Activated T-helper 1 cell treated with anti-CD3 and anti-CD28 coated beads, Interleukin-12 subunit alpha, Interleukin-12 subunit beta, Interleukin-2, Interleukin-4 antibody, amounts not matched to agents 30 ng/mL and 10 ng/mL and 1 ng/mL, durations not matched to agents 14 hours and 24 hours and 36 hours (primary cell): ENCODE measurements at regions of chr10 and their contacts with region 1.

Region 1: DNA sequence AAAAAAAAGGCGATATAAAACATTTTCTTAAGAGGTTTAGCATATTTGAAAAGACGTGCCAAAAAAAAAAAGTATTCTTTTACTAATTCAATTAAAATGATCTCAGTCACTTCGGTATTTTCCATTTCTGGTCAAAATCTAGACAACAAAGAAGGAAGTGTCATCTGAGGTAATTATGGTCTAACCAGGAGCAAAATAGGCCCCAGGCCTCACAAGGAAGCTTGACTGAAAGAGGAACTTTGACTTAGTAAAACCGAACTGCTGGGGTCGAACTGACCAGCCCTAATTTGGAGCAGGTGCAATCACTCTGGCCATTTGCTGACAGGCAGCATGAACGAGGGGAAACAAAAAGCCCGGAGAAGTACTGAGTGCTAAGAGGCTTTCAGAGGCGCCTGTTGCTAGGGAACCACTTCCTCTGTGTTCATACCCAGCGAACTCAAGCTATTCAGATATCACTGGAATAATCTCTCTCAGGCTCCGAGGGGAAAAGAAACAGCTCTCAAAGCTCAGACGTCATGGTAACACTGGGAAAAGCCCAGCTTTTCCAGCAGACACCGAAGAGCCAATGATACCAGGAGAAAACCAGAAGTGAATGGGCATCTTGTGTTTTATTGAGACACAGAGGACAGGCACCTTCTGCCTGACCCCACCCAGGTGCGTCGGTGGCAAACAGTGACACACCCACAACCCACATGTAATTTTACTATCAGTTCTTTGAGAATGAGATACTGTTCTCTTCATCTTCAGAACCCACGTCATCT is 126.5 kb downstream of the FAM107B start:
- DNase-seq: peak; percentile 67
- H3K4me3 Mint-ChIP-seq: peak overlapping the region; percentile 73
- H3K27ac Mint-ChIP-seq: peak overlapping the region; percentile 98
- H3K4me1 Mint-ChIP-seq: peaks cover 61% of the 10 kb centered on the region
- H3K27me3 Mint-ChIP-seq: no peaks in the 10 kb centered on the region

Region 2: DNA sequence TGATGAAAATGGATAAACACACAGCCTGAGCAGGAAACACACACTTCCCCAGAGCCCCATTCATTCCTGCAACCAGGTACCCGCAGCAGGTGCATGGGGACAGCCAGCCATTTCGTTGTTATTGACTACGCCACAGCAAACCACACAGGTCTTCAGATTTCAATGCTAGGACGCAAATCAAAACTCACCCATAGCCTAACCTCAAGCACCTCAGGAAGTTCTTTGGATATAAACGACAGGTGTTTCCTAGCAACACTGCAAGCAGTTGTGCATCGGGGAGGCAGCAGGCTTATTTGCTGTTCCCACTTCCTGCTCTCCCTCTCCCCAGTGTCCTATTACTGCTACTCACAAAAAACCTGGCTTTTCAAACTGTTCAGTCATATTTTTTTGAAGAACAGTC is 141.0 kb before region 1 on chr10:
- intact Hi-C with region 1: loop called (anchors 5 kb)
- DNase-seq: peak; percentile 37
- H3K4me3 Mint-ChIP-seq: no peak overlapping the region
- H3K27ac Mint-ChIP-seq: peak overlapping the region; percentile 70
- H3K4me1 Mint-ChIP-seq: peaks cover 35% of the 10 kb centered on the region
- H3K27me3 Mint-ChIP-seq: no peaks in the 10 kb centered on the region

Region 3: GRCh38 chr10:14588084-14588937 is 59.9 kb before region 1 on chr10:
- intact Hi-C with region 1: loop called (anchors 1 kb)
- DNase-seq: peak; percentile 52
- H3K4me3 Mint-ChIP-seq: peak overlapping the region; percentile 74
- H3K27ac Mint-ChIP-seq: peak overlapping the region; percentile 97
- H3K4me1 Mint-ChIP-seq: peaks cover 94% of the 10 kb centered on the region
- H3K27me3 Mint-ChIP-seq: no peaks in the 10 kb centered on the region

Region 4: GRCh38 chr10:14686323-14686722 is 38.1 kb after region 1 on chr10:
- intact Hi-C with region 1: loop called (anchors 1 kb)
- DNase-seq: no peak
- H3K4me3 Mint-ChIP-seq: no peak overlapping the region
- H3K27ac Mint-ChIP-seq: peak overlapping the region; percentile 40
- H3K4me1 Mint-ChIP-seq: peaks cover 38% of the 10 kb centered on the region
- H3K27me3 Mint-ChIP-seq: peaks cover 2% of the 10 kb centered on the region

Region 5: DNA sequence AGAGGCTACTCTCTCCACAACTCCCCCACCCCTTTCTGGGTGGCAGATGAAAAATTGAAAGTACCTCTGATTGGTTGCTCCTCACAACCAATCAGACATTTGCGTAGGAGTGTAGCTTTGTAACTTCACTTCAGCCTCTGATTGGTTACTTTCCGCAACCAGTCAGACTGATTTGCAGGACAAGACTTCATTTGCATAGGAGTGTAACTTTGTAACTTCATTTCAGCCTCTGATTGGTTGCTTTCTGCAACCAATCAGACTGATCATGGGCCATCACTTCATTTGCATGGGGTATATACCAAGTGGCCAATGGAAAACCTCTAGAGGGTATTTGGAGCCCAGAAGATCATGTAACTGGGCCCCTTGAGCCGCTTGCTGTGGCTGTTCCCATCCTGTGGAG is 164.1 kb after region 1 on chr10:
- intact Hi-C with region 1: no loop called
- DNase-seq: no peak
- H3K4me3 Mint-ChIP-seq: no peak overlapping the region
- H3K27ac Mint-ChIP-seq: no peak overlapping the region
- H3K4me1 Mint-ChIP-seq: peaks cover 23% of the 10 kb centered on the region
- H3K27me3 Mint-ChIP-seq: no peaks in the 10 kb centered on the region

Region 6: GRCh38 chr10:15097011-15097812 is 449.0 kb after region 1 on chr10 and contains the start of gene RPP38:
- intact Hi-C with region 1: loop called (anchors 5 kb)
- DNase-seq: peak; percentile 94
- H3K4me3 Mint-ChIP-seq: peak within 1 kb of the TSS; percentile 100
- H3K27ac Mint-ChIP-seq: peak within 1 kb of the TSS; percentile 99
- H3K4me1 Mint-ChIP-seq: peaks cover 29% of the 10 kb centered on the region
- H3K27me3 Mint-ChIP-seq: peaks cover 10% of the 10 kb centered on the region
- total RNA-seq, gene RPP38: 19.6 and 24.8 TPM in 2 replicates